CD8-positive, alpha-beta T cell (primary cell): ENCODE measurements at regions of chr7 and their contacts with region 1.

Region 1: DNA sequence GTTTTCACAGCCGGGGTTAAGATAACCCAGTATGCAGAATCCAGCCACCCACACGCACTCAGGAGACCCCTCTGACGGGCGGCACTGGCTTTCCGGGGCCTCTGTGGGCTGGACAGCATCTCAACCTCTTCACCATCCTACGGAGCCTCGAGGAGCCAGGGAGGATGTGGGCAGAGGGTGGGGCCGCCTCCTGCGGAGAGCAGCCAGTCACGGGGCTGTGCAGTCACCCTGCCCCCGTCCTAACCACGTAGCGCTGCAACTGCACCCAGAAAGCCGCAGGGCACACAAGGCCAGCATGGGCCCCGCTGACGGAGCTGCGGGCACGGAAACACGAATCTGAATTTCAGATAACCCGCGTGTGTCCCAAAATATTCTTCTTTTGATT is 270.3 kb downstream of the ELFN1 start:
- DNase-seq: peak; percentile 84 to 98 (median 90)
- ATAC-seq: peak; percentile 87
- H3K4me3 ChIP-seq: peak overlapping the region; percentile 65 to 90
- H3K4me3 Mint-ChIP-seq: peak overlapping the region; percentile 94
- H3K27ac ChIP-seq: peak overlapping the region; percentile 88 to 95
- H3K27ac Mint-ChIP-seq: peak overlapping the region; percentile 98
- H3K4me1 ChIP-seq: peaks cover 65% of the 10 kb centered on the region
- H3K4me1 Mint-ChIP-seq: peaks cover 67% of the 10 kb centered on the region
- H3K27me3 ChIP-seq: no peaks in the 10 kb centered on the region
- H3K27me3 Mint-ChIP-seq: no peaks in the 10 kb centered on the region
- CTCF ChIP-seq: no peak

Region 2: DNA sequence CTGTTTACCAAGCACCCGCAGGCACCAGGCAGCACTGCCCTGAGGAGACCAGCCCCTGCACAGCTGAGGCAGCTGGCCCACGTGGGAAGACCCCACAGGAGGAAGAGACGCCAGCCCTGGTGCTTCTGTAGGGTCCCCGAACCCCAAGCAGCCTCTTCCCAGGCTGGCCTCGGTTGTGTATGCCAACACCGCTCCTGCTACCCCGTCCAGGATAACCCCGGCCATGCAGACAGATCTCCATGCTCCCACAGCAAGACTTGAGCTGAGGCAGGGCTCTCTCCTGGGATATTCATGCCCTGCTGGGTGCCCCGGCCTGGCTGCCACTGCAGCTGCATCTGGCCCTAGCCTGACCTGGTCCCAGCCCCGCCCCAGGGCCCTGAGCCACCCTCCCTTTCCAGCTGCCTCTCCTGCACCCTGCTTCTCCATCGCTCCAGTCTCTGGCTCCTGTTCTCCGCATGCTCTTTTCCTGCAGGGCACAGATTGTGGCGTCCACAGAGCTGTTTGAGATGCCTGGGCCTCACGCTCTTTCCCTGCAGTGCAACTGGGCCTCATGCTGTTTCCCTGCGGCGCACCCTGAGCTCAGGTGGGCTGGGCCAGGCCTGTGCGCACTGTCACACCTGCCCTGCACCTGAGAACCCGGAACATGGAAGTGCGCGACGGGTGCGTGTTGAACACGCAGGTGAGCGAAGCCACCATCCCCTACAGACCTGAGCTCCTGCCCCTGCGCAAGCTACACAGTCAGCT is 34.1 kb before region 1 on chr7:
- CTCF ChIA-PET with region 1: no interaction called
- POLR2A ChIA-PET with region 1: no interaction called
- intact Hi-C with region 1: no loop called
- DNase-seq: peak in 1 of 9 experiments; percentile 14
- ATAC-seq: peak; percentile 23
- H3K4me3 ChIP-seq: no peak overlapping the region
- H3K4me3 Mint-ChIP-seq: no peak overlapping the region
- H3K27ac ChIP-seq: no peak overlapping the region
- H3K27ac Mint-ChIP-seq: peak overlapping the region; percentile 55
- H3K4me1 ChIP-seq: no peaks in the 10 kb centered on the region
- H3K4me1 Mint-ChIP-seq: peaks cover 19% of the 10 kb centered on the region
- H3K27me3 ChIP-seq: no peaks in the 10 kb centered on the region
- H3K27me3 Mint-ChIP-seq: no peaks in the 10 kb centered on the region
- CTCF ChIP-seq: no peak

Region 3: DNA sequence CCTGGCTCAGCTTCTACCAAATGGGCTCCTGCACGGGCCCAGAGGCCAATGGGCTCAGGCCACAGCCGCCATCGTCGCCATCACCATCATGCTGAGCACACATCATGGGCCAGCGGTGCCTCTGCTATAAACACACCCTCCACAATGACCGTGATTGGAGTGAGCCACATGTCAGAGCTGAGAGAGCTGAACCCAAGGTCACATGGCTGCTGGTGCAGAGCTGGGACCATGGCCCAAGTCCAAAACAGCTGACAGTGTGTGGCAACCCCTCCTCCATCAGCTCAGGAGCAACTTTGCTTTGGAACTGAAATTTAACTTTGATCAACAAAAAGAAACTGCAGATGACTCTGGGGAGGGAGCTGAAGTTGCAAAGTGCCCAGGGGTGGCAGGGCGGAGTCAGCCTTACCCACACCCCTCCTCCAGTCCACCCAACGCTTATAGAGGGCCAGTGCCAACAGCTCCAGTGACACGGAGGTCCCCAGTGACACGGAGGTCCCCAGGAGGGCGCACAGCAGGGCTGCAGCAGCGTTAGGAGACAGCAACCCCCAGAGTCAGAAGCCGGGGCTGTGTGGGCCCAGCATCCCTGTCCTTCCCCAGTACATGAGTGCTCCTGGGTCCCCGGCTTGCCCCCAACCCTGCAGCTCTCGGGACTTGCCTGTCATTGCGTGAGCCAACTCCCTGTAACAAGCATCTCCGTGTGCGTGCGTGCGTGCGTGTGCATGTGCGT is 20.7 kb before region 1 on chr7:
- CTCF ChIA-PET with region 1: interaction called, 3 read pairs
- POLR2A ChIA-PET with region 1: interaction called, 34 read pairs
- intact Hi-C with region 1: loop called in 1 of 2 experiments (anchors 1 kb)
- DNase-seq: peak in 1 of 9 experiments; percentile 34
- ATAC-seq: peak; percentile 22
- H3K4me3 ChIP-seq: peak overlapping the region; percentile 38 to 45
- H3K4me3 Mint-ChIP-seq: peak overlapping the region; percentile 89
- H3K27ac ChIP-seq: peak overlapping the region in 1 of 2 experiments; percentile 30
- H3K27ac Mint-ChIP-seq: peak overlapping the region; percentile 87
- H3K4me1 ChIP-seq: peaks cover 78% of the 10 kb centered on the region
- H3K4me1 Mint-ChIP-seq: peaks cover 70% of the 10 kb centered on the region
- H3K27me3 ChIP-seq: no peaks in the 10 kb centered on the region
- H3K27me3 Mint-ChIP-seq: no peaks in the 10 kb centered on the region
- CTCF ChIP-seq: no peak

Region 4: DNA sequence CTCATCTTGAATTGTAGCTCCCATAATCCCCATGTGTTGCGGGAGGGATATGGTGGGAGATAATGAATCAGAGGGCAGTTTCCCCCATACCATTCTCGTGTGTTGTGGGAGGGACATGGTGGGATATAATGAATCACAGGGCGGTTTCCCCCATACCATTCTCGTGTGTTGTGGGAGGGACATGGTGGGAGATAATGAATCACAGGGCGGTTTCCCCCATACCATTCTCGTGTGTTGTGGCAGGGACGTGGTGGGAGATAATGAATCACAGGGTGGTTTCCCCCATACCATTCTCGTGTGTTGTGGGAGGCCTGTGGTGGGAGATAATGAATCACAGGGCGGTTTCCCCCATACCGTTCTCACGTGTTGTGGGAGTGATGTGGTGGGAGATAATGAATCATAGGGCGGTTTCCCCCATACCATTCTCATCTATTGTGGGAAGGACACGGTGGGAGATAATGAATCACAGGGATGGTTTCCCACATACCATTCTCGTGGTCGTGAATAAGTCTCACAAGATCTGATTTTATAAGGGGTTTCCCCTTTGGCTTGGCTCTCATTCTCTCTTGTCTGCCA is 21.4 kb after region 1 on chr7:
- CTCF ChIA-PET with region 1: no interaction called
- POLR2A ChIA-PET with region 1: no interaction called
- intact Hi-C with region 1: loop called (anchors 1 kb)
- DNase-seq: peak in 8 of 9 experiments; percentile 34 to 89 (median 62)
- ATAC-seq: peak; percentile 83
- H3K4me3 ChIP-seq: no peak overlapping the region
- H3K4me3 Mint-ChIP-seq: no peak overlapping the region
- H3K27ac ChIP-seq: peak overlapping the region in 1 of 2 experiments; percentile 33
- H3K27ac Mint-ChIP-seq: peak overlapping the region; percentile 77
- H3K4me1 ChIP-seq: no peaks in the 10 kb centered on the region
- H3K4me1 Mint-ChIP-seq: no peaks in the 10 kb centered on the region
- H3K27me3 ChIP-seq: no peaks in the 10 kb centered on the region
- H3K27me3 Mint-ChIP-seq: no peaks in the 10 kb centered on the region
- CTCF ChIP-seq: no peak

Region 5: GRCh38 chr7:2019607-2020511 is 79.5 kb after region 1 on chr7:
- CTCF ChIA-PET with region 1: no interaction called
- POLR2A ChIA-PET with region 1: no interaction called
- intact Hi-C with region 1: loop called in 1 of 2 experiments (anchors 5 kb)
- DNase-seq: peak in 6 of 9 experiments; percentile 25 to 81 (median 64)
- ATAC-seq: peak; percentile 92
- H3K4me3 ChIP-seq: peak overlapping the region; percentile 19 to 26
- H3K4me3 Mint-ChIP-seq: peak overlapping the region; percentile 69
- H3K27ac ChIP-seq: peak overlapping the region in 1 of 2 experiments; percentile 18
- H3K27ac Mint-ChIP-seq: peak overlapping the region; percentile 81
- H3K4me1 ChIP-seq: peaks cover 19% of the 10 kb centered on the region
- H3K4me1 Mint-ChIP-seq: peaks cover 23% of the 10 kb centered on the region
- H3K27me3 ChIP-seq: no peaks in the 10 kb centered on the region
- H3K27me3 Mint-ChIP-seq: no peaks in the 10 kb centered on the region
- CTCF ChIP-seq: no peak

Region 6: GRCh38 chr7:2104107-2104710 is 163.8 kb after region 1 on chr7:
- CTCF ChIA-PET with region 1: no interaction called
- POLR2A ChIA-PET with region 1: interaction called, 5 read pairs
- intact Hi-C with region 1: loop called in 1 of 2 experiments (anchors 10 kb)
- DNase-seq: peak; percentile 50 to 90 (median 72)
- ATAC-seq: peak; percentile 79
- H3K4me3 ChIP-seq: peak overlapping the region in 1 of 2 experiments; percentile 0
- H3K4me3 Mint-ChIP-seq: peak overlapping the region; percentile 59
- H3K27ac ChIP-seq: no peak overlapping the region
- H3K27ac Mint-ChIP-seq: peak overlapping the region; percentile 76
- H3K4me1 ChIP-seq: peaks cover 25% of the 10 kb centered on the region
- H3K4me1 Mint-ChIP-seq: peaks cover 33% of the 10 kb centered on the region
- H3K27me3 ChIP-seq: no peaks in the 10 kb centered on the region
- H3K27me3 Mint-ChIP-seq: no peaks in the 10 kb centered on the region
- CTCF ChIP-seq: peak; percentile 43

Region 7: GRCh38 chr7:2709553-2710285 is 769.3 kb after region 1 on chr7:
- CTCF ChIA-PET with region 1: interaction called, 3 read pairs
- POLR2A ChIA-PET with region 1: no interaction called
- intact Hi-C with region 1: loop called in 1 of 2 experiments (anchors 10 kb)
- DNase-seq: peak; percentile 58 to 90 (median 76)
- ATAC-seq: peak; percentile 78
- H3K4me3 ChIP-seq: peak overlapping the region; percentile 31 to 38
- H3K4me3 Mint-ChIP-seq: peak overlapping the region; percentile 66
- H3K27ac ChIP-seq: no peak overlapping the region
- H3K27ac Mint-ChIP-seq: peak overlapping the region; percentile 62
- H3K4me1 ChIP-seq: peaks cover 32% of the 10 kb centered on the region
- H3K4me1 Mint-ChIP-seq: peaks cover 30% of the 10 kb centered on the region
- H3K27me3 ChIP-seq: peaks cover 7 to 9% of the 10 kb centered on the region in 2 experiments
- H3K27me3 Mint-ChIP-seq: peaks cover 8% of the 10 kb centered on the region
- CTCF ChIP-seq: peak; percentile 83